ENCODE measurements at regions of chr22 and their contacts with region 1.

Region 1: DNA sequence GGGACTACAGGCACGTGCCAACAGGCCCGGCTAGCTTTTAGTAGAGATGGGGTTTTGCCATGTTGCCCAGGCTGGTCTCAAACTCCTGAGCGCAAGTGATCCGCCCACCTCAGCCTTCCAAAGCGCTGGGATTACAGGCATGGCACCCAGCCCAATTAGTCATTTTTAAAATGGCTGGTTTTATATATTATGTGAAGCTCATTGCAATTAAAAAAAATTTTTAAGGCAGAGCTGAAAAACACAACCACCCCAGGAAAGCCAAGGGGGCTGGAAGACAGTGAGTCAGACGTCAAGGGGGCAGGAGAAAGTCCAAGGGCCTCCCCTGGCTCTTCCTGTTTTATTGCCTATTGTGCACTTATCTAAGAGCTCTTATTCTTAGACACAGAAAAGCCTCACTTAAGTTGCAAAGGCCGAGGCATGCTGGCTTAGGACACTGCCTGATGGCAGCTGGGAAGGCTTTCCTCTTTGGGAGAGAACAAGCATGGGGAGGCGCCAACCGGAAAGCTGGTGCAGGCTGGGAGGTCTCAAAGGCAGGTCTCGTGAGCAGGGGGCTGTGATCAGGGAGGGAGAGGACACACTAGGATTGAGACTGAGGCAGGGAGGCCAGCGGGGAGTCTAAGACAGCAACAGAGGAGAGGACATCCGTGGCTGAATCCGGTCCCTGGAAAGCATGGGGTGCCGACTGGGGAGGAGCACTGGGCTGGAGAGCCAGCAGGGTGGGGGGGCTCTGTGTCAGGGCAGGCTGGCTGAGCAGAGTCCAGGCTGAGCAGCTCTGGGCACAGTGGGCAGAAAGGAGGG is 11.1 kb upstream of the OSM start:
- DNase-seq: no peak
- H3K4me3 ChIP-seq: no peak overlapping the region
- H3K27me3 ChIP-seq: peaks cover 5% of the 10 kb centered on the region
- CTCF ChIP-seq: no peak

Region 2: GRCh38 chr22:30079952-30080533 is 197.7 kb before region 1 on chr22 and contains the start of gene HORMAD2:
- CTCF ChIA-PET with region 1: no interaction called
- POLR2A ChIA-PET with region 1: no interaction called
- DNase-seq: no peak
- H3K4me3 ChIP-seq: no peak within 1 kb of the TSS
- H3K27me3 ChIP-seq: peaks cover 9% of the 10 kb centered on the region
- CTCF ChIP-seq: no peak
- polyA plus RNA-seq, gene HORMAD2: not detected in 2 replicates

Region 3: DNA sequence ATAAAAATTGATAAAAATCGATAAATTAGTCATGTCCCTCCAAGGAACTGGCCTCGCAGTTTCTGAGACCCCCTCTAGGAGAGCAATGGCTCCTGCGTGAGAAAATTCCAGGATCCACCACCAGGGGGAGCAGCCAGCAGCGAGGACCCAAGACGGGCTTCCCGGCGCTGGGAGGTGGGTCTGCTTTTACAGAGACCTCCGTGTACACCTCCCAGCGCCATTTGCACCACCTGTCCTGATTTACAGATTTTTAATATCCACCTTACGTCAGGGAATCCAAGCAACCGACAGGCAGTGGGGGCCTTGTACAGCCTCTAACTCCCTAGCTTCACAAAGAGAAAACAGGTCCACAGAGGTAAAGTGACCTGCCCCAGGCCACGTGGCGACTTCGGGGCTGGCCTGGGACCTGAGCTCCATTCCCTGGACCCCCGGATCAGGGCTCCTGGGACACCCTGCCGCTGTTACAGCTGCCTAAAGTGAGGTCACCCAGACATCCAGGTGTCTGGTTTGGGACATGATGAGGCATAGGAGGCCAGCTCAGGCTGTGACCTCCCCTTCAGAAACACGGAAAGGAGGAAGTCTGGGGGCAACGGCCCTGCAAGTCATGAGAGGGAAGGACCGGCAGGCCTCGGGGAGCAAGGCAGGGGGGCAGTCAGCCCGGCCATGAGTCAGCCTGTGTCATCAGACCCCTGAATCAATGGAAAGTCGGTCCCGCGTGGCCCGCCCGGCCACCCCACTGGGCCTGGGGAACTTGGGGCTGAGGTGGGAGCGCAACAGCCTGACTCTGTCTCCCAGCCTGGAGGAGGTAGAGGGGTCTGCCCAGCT is 14.6 kb before region 1 on chr22:
- CTCF ChIA-PET with region 1: interaction called, 41 read pairs
- POLR2A ChIA-PET with region 1: no interaction called
- DNase-seq: no peak
- H3K4me3 ChIP-seq: no peak overlapping the region
- H3K27me3 ChIP-seq: no peaks in the 10 kb centered on the region; the same call in 1 of the 2 replicates
- CTCF ChIP-seq: peak; percentile 95

Region 4: GRCh38 chr22:30357236-30357570 is 79.5 kb after region 1 on chr22:
- CTCF ChIA-PET with region 1: no interaction called
- POLR2A ChIA-PET with region 1: no interaction called
- DNase-seq: no peak
- H3K4me3 ChIP-seq: peak overlapping the region; percentile 85
- H3K27me3 ChIP-seq: no peaks in the 10 kb centered on the region
- CTCF ChIP-seq: no peak